ENCODE measurements at regions of chrX and their contacts with region 1.

Region 1: DNA sequence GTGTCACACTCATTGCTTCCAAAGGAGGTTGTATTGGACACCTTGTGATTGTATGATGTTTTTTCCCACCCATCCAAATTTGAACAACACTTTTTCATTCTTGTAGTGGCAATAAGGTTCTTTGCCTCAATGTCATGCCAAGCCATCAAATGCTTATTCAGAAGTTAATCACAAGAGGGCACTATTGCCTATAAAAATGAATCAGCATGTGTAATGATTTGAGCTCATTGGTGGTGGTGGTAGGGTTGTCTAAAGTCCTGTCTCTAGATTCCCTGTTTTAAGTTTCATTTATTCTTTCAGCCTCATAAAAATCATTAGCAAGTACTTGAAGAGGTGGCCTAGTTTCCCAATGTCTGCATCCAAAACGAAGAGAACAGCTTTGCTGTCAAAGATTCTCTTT is 37.0 kb downstream of the IRS4 start:
- DNase-seq: peak; percentile 7
- ATAC-seq: peak; percentile 92
- H3K4me3 ChIP-seq: no peak overlapping the region
- H3K27ac ChIP-seq: no peak overlapping the region
- H3K4me1 ChIP-seq: no peaks in the 10 kb centered on the region
- H3K27me3 ChIP-seq: no peaks in the 10 kb centered on the region
- CTCF ChIP-seq: peak; percentile 23 to 55 (median 50); a peak in 5 of 6 replicates
- EP300 ChIP-seq: no peak
- POLR2A ChIP-seq: no peak
- RAD21 ChIP-seq: peak; percentile 68

Region 2: DNA sequence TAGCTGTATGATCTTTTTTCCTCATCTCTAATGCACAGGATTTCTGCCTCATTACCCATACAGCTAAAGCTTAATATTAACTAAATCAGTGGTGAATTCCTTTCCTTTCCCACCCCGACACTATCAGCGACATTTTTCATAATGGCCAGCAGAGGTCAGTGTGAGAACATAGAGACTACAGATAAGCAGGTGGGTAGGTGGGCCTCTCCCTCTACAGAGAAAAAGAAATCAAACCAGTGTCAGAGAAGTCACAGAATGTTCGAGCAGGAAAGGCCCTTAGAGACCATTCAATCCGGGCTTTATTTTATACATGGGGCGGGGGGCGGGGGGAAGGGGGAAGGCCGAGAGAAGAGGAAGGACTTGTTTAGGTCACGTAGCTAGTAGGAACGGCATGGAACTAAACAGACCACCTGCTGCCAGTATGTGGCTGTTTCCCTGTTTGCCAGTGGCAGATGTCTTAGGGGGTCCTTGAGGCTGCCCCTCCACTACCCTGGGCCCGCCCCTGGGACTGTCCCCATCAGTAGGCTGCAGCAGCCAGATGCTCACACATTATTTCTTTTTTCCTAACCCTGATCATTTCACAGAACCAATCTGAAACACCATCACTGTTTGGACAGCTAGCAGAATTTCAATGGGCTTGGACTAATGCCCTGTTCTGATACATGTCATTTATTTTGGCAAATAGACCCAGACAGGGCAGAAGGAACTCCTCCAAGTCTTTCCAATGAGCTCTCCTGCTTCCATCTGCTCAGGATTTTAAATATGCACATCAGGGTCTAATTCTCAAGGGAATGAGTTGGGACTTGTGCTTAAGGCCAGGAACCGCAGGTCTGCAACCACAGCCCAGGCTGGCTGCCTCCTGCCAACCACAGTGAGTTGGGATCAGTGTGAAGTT is 474.4 kb before region 1 on chrX:
- CTCF ChIA-PET with region 1: interaction called, 4 read pairs
- POLR2A ChIA-PET with region 1: no interaction called
- RAD21 ChIA-PET with region 1: interaction called, 10 read pairs
- SMC1A ChIA-PET with region 1: no interaction called
- in situ Hi-C with region 1: no loop called
- intact Hi-C with region 1: no loop called
- DNase-seq: peak; percentile 16
- ATAC-seq: peak; percentile 87
- H3K4me3 ChIP-seq: no peak overlapping the region
- H3K27ac ChIP-seq: no peak overlapping the region
- H3K4me1 ChIP-seq: no peaks in the 10 kb centered on the region
- H3K27me3 ChIP-seq: no peaks in the 10 kb centered on the region
- CTCF ChIP-seq: peak; percentile 59 to 67 (median 64)
- EP300 ChIP-seq: no peak
- POLR2A ChIP-seq: no peak
- RAD21 ChIP-seq: peak; percentile 76

Region 3: GRCh38 chrX:109049902-109050301 is 350.5 kb after region 1 on chrX:
- CTCF ChIA-PET with region 1: interaction called, 14 read pairs
- POLR2A ChIA-PET with region 1: no interaction called
- RAD21 ChIA-PET with region 1: interaction called, 17 read pairs
- SMC1A ChIA-PET with region 1: interaction called, 4 read pairs
- in situ Hi-C with region 1: no loop called
- intact Hi-C with region 1: no loop called
- DNase-seq: no peak
- ATAC-seq: peak; percentile 71
- H3K4me3 ChIP-seq: no peak overlapping the region
- H3K27ac ChIP-seq: no peak overlapping the region
- H3K4me1 ChIP-seq: no peaks in the 10 kb centered on the region
- H3K27me3 ChIP-seq: no peaks in the 10 kb centered on the region
- CTCF ChIP-seq: peak; percentile 26 to 44 (median 33); a peak in 5 of 6 replicates
- EP300 ChIP-seq: no peak
- POLR2A ChIP-seq: no peak
- RAD21 ChIP-seq: peak; percentile 53

Region 4: GRCh38 chrX:109374262-109374960 is 675.0 kb after region 1 on chrX:
- CTCF ChIA-PET with region 1: interaction called, 3 read pairs
- POLR2A ChIA-PET with region 1: interaction called, 6 read pairs
- RAD21 ChIA-PET with region 1: interaction called, 10 read pairs
- SMC1A ChIA-PET with region 1: interaction called, 10 read pairs
- in situ Hi-C with region 1: no loop called
- intact Hi-C with region 1: no loop called
- DNase-seq: no peak
- ATAC-seq: no peak; the same call in 2 of the 3 replicates
- H3K4me3 ChIP-seq: no peak overlapping the region
- H3K27ac ChIP-seq: no peak overlapping the region
- H3K4me1 ChIP-seq: no peaks in the 10 kb centered on the region
- H3K27me3 ChIP-seq: no peaks in the 10 kb centered on the region
- CTCF ChIP-seq: no peak
- EP300 ChIP-seq: no peak
- POLR2A ChIP-seq: no peak
- RAD21 ChIP-seq: no peak

Region 5: GRCh38 chrX:109475174-109475891 is 776.0 kb after region 1 on chrX:
- CTCF ChIA-PET with region 1: interaction called, 34 read pairs
- POLR2A ChIA-PET with region 1: no interaction called
- RAD21 ChIA-PET with region 1: no interaction called
- SMC1A ChIA-PET with region 1: interaction called, 16 read pairs
- in situ Hi-C with region 1: no loop called
- intact Hi-C with region 1: loop called (anchors 1 kb)
- DNase-seq: no peak
- ATAC-seq: peak; percentile 61
- H3K4me3 ChIP-seq: no peak overlapping the region
- H3K27ac ChIP-seq: no peak overlapping the region
- H3K4me1 ChIP-seq: no peaks in the 10 kb centered on the region
- H3K27me3 ChIP-seq: no peaks in the 10 kb centered on the region; a peak in 1 of 4 replicates
- CTCF ChIP-seq: peak in 2 of 3 experiments; percentile 13 to 19; a peak in 2 of 6 replicates
- EP300 ChIP-seq: no peak
- POLR2A ChIP-seq: no peak
- RAD21 ChIP-seq: 0 out of 2 replicates have a peak, but pooled peaks have one; percentile 22

Region 6: DNA sequence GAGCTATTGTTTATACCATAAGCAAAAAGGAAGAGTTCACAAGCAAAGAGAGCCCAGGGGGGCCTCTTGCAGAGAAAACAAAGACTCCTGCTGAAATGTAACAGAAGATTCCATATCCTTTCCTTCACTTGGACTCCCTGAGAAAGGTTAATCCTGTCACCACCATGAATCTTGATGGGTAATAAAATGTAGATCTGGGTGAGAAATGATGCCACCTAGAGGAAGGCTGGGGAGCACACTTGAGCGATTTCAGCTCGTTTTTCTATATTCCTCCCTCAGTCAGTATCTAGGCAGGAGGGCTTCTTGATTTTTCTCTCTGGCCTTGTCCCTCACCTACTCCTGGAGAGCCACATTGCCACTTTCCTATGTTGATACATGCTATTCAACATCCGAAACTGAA is 935.8 kb after region 1 on chrX:
- CTCF ChIA-PET with region 1: interaction called, 5 read pairs
- POLR2A ChIA-PET with region 1: no interaction called
- RAD21 ChIA-PET with region 1: interaction called, 8 read pairs
- SMC1A ChIA-PET with region 1: interaction called, 5 read pairs
- in situ Hi-C with region 1: no loop called
- intact Hi-C with region 1: loop called (anchors 10 kb)
- DNase-seq: no peak
- ATAC-seq: peak; percentile 86
- H3K4me3 ChIP-seq: no peak overlapping the region
- H3K27ac ChIP-seq: no peak overlapping the region
- H3K4me1 ChIP-seq: no peaks in the 10 kb centered on the region
- H3K27me3 ChIP-seq: no peaks in the 10 kb centered on the region
- CTCF ChIP-seq: peak; percentile 44 to 69 (median 50); a peak in 4 of 6 replicates
- EP300 ChIP-seq: no peak
- POLR2A ChIP-seq: no peak
- RAD21 ChIP-seq: peak; percentile 26

Measured in GM12878 (cell line).